ENCODE measurements at regions of chr19 and their contacts with region 1.

Region 1: GRCh38 chr19:55258828-55259539 is at the start of gene PPP6R1:
- DNase-seq: peak; percentile 95
- H3K4me3 Mint-ChIP-seq: peak within 1 kb of the TSS; percentile 88
- H3K27ac Mint-ChIP-seq: peak within 1 kb of the TSS; percentile 99
- H3K4me1 Mint-ChIP-seq: peaks cover 16% of the 10 kb centered on the region
- H3K27me3 Mint-ChIP-seq: no peaks in the 10 kb centered on the region
- total RNA-seq, gene PPP6R1: 166 to 174 TPM

Region 2: DNA sequence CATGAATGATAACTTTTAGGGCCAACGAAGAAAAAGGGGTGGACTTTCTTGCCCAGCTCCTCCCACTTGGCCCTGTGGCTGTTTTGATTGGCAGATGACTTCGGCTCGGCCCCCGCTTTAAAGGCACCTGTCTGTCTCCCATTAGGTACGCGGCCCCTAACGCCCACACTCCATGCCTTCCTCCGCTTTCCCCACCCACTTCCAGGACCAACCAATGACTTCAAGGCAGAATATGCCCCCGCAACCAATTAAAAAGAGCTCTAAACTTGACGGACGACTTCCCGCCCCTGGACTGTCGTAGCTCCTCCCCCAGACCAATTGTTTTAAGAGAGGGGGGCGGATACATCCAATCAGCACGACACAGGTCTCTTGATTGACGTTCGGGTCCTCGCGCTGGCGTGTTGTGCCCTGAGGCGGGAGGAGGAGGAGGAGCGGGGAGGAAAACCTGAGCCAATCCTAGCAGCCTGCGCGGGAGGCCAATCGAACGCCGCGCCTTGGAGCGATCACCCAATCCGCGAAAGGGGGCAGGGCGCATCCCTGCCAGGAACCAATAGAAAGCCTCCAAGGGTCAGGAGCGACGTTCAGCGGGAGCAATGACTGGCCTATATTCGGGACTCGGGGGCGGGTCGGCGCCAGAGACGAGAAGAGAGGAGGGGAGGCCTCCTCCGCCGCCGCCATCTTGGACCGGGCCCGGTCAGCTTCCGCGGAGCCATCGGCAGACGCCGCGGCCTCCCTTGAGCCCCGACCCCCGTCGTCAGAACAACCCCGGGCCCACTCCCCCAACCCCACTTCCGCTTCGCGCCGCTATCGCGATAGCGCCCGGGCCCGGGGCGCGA is 1121.7 kb before region 1 on chr19 and contains the start of gene CNOT3:
- CTCF ChIA-PET with region 1: no interaction called
- intact Hi-C with region 1: loop called (anchors 10 kb)
- DNase-seq: peak; percentile 100
- H3K4me3 Mint-ChIP-seq: peak within 1 kb of the TSS; percentile 83
- H3K27ac Mint-ChIP-seq: peak within 1 kb of the TSS; percentile 89
- H3K4me1 Mint-ChIP-seq: peaks cover 39% of the 10 kb centered on the region
- H3K27me3 Mint-ChIP-seq: no peaks in the 10 kb centered on the region
- total RNA-seq, gene CNOT3: 50.4 to 58.3 TPM

Region 3: DNA sequence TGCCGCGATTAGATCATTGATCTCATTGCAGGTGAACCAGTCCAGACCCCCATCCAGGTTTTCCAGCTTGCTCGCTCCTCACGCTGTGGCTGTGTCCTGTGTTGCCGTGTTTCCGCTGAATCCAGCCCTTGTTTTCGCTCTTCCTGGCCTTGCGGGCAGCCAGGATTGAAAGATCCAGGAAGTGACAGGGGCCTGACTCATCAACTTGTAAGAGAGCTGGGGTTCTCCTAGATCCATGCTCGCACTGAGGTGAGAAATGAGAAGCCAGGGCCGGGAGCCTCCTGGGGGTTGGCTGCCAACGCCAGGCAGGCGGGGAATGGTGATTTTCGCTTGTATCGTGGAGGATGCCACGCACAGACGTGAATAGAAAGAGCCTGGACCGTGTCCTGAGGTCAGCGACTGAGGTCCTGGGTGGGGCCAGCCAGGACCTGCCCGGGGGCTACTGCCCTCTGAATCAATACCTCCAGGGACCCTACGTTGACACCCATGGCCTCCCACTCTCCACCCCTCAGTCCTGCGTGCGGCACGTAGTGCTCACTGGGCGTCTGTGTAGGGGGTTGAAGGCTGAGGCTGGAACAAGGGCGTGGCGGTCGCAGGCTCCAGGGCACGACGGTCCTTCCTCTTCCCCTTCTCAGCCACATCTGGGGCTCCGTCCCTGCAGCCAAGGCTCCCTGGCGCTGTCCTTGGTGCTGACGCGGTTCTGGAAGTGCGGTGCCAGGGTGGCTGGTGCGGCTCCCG is 42.4 kb before region 1 on chr19:
- CTCF ChIA-PET with region 1: interaction called, 3 read pairs
- intact Hi-C with region 1: loop called (anchors 1 kb)
- DNase-seq: peak; percentile 79
- H3K4me3 Mint-ChIP-seq: peak overlapping the region; percentile 50
- H3K27ac Mint-ChIP-seq: no peak overlapping the region
- H3K4me1 Mint-ChIP-seq: peaks cover 13% of the 10 kb centered on the region
- H3K27me3 Mint-ChIP-seq: peaks cover 22% of the 10 kb centered on the region

Region 4: DNA sequence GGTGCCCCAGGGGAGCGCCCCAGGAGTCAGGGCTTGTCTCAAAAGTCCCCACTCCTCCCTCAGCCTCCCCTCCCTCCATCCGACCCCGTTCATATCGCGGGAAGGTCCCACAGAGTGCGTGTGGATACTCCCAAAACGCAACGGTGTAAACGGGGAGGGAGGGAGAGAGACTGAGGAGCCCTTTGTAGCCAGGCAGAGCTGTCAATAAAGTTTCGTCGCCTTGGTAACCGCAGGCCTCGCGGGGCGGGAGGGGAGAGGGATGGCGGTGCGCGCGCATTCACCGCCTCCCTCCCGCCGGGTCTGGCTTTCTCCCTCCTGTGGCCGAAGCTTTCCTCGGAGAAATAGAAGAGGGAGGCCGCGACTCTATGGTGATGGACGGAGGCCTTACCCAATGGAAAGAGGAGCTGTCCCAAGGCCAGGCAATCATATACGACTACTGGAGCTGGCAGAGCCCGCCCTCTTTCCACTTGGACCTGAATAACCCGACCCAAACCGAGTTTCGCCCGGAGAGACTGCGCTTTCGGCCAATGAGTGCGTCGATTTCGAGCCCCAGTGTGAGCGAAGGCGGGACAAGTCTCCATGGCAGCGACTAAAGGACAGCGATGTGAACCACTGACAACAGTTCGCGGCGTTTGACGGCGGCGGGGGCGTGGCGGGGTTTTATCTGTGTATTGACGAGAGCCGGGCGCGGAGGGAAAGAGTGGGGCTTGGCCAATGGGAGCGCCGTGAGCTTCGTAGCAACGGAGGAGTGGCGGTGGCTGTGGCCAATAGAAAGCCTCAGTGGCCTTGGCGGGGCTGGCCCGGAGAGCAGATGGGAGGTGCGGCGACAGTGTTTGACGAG is 80.3 kb after region 1 on chr19 and contains the start of gene KMT5C:
- CTCF ChIA-PET with region 1: interaction called, 3 read pairs
- intact Hi-C with region 1: loop called (anchors 1 kb)
- DNase-seq: peak; percentile 100
- H3K4me3 Mint-ChIP-seq: peak within 1 kb of the TSS; percentile 90
- H3K27ac Mint-ChIP-seq: peak within 1 kb of the TSS; percentile 92
- H3K4me1 Mint-ChIP-seq: peaks cover 12% of the 10 kb centered on the region
- H3K27me3 Mint-ChIP-seq: no peaks in the 10 kb centered on the region
- total RNA-seq, gene KMT5C: 45.9 to 47.1 TPM

Region 5: DNA sequence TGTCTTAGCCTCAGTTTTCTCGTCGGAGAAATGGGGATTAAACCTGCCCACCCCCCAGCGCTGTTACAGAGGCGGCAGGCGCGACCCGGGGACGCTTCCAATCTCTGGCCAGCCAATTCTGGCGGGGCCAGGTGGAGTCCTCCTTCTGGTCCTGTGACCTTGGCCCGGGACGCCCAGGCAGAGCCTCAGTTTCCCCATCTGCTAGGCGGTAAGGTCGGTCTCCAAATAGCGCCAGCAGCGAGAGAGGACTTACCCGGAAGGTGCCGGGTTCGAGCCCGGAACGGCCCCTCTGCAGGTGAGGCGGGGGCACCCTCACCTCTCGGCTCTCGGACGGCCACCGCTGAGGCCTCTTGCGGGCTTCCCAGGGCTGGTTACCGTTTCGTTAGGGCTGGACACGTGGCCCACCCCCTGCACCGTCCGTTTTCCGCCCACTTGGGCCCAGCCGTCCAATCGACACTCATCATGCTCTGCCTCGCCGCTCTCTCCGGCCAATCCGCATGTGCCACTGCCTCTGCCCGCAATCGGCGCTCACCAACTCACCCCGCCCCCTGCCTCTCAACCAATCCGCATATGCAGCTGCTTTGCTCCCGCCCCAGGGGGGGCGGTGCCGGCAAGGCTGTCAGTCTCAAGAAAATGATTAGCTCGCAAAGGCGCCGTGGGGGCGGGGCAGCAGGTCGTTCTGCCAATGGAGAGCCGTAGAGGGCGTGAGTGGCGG is 202.4 kb after region 1 on chr19 and contains the start of gene ISOC2:
- CTCF ChIA-PET with region 1: interaction called, 3 read pairs
- intact Hi-C with region 1: loop called (anchors 1 kb)
- DNase-seq: peak; percentile 100
- H3K4me3 Mint-ChIP-seq: peak within 1 kb of the TSS; percentile 93
- H3K27ac Mint-ChIP-seq: peak within 1 kb of the TSS; percentile 77
- H3K4me1 Mint-ChIP-seq: peaks cover 20% of the 10 kb centered on the region
- H3K27me3 Mint-ChIP-seq: no peaks in the 10 kb centered on the region
- total RNA-seq, gene ISOC2: 18.6 to 20.5 TPM

Region 6: GRCh38 chr19:55643348-55644176 is 384.6 kb after region 1 on chr19 and contains the start of gene ZNF581:
- CTCF ChIA-PET with region 1: interaction called, 3 read pairs
- intact Hi-C with region 1: loop called (anchors 5 kb)
- DNase-seq: peak; percentile 82
- H3K4me3 Mint-ChIP-seq: peak within 1 kb of the TSS; percentile 93
- H3K27ac Mint-ChIP-seq: peak within 1 kb of the TSS; percentile 96
- H3K4me1 Mint-ChIP-seq: peaks cover 44% of the 10 kb centered on the region
- H3K27me3 Mint-ChIP-seq: no peaks in the 10 kb centered on the region
- total RNA-seq, gene ZNF581: 18.0 to 20.7 TPM